ENCODE measurements at regions of chr10 and their contacts with region 1.

Region 1: GRCh38 chr10:35126530-35127296 is at the start of gene CREM:
- DNase-seq: peak; percentile 91 to 98 (median 96)
- H3K4me3 ChIP-seq: peak within 1 kb of the TSS; percentile 65 to 93 (median 86)
- H3K27ac ChIP-seq: peak within 1 kb of the TSS; percentile 88 to 100 (median 98)
- H3K27me3 ChIP-seq: no peaks in the 10 kb centered on the region
- CTCF ChIP-seq: peak; percentile 58 to 96 (median 84)
- total RNA-seq, gene CREM: 20.4 to 57.0 (median 37.2) TPM

Region 2: DNA sequence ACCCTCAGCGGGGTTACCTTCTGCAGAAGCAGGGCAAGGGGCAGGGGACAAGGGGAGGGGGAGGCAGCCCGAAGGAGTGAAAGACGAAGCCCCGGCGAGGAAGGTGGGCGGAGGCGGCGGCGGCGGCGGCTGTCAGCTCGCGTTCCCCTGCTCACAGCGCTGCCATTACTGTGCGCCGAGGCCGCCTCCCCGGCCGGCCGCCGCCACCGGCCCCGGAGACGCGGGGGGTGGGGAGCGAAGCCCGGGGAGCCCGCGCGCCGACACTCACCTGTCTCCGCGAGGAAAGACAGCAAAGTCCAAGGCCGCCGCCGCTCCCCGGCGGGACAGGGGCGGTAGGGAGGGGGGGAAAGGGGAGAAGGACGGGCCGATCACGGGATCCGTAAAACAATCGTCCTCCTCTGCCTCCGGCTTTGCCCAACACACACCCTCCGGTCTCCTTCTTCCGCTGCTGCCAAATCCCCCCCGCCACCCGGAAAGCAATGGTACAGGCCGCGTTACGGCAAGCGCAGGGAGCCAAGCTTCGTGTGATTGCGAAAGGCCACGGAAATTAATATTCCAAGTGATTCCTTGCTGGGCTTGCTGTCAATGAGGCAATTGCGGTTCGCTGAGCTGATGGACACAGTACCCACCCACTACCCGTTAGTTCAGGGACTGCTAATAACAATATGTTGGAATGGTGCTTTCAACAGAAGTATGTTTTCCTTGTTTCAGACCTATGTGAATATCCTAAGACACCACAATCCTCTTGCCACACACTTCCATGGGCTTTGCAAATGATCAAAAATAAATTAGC is 36.4 kb before region 1 on chr10 and contains the start of gene CUL2:
- intact Hi-C with region 1: loop called in 1 of 2 experiments (anchors 2 kb)
- DNase-seq: peak; percentile 80 to 96 (median 88)
- H3K4me3 ChIP-seq: peak within 1 kb of the TSS; percentile 60 to 96 (median 87)
- H3K27ac ChIP-seq: peak within 1 kb of the TSS; percentile 20 to 98 (median 92)
- H3K27me3 ChIP-seq: no peaks in the 10 kb centered on the region
- CTCF ChIP-seq: peak in 19 of 56 donors; percentile 7 to 48 (median 27)
- total RNA-seq, gene CUL2: 26.3 to 63.8 (median 45.2) TPM

Region 3: GRCh38 chr10:35195361-35196306 is 68.9 kb after region 1 on chr10:
- intact Hi-C with region 1: loop called (anchors 2 to 5 kb)
- DNase-seq: peak in 2 of 10 donors; percentile 55 to 57
- H3K4me3 ChIP-seq: peak overlapping the region; percentile 32 to 79 (median 59)
- H3K27ac ChIP-seq: peak overlapping the region; percentile 60 to 99 (median 91)
- H3K27me3 ChIP-seq: no peaks in the 10 kb centered on the region
- CTCF ChIP-seq: peak; percentile 65 to 94 (median 83)

Region 4: DNA sequence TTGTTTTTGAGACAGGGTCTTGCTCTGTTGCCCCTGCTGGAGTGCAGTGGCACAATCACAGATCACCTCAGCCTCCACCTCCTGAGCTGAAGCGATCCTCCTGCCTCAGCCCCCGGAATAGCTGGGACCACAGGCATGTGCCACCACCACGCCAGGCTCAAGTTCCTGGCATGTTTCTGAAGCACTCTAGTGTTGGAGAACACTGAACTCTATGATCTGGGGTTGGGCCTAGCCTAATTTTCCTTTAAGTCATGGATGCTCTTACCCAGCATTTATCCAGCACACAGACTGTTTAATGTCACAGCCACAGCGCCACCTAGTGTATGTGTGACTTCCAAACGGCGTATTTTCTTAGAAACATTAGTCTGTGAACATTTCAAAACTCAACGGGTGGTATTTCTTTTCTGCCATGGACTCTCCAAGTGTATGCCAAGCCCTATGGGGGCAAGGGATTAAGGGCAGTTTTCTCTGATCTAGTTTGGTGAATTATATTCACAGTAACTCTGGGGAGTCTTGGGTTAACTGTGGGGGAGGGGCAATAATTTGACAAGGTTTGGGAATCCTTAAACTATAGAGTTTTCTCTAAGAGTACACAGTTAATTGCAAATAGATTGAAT is 91.7 kb after region 1 on chr10:
- intact Hi-C with region 1: loop called (anchors 1 to 2 kb)
- DNase-seq: peak; percentile 28 to 93 (median 74)
- H3K4me3 ChIP-seq: peak overlapping the region in 7 of 59 donors; percentile 11 to 36 (median 16)
- H3K27ac ChIP-seq: peak overlapping the region in 39 of 59 donors; percentile 2 to 85 (median 51)
- H3K27me3 ChIP-seq: no peaks in the 10 kb centered on the region
- CTCF ChIP-seq: peak; percentile 76 to 99 (median 89)

Region 5: DNA sequence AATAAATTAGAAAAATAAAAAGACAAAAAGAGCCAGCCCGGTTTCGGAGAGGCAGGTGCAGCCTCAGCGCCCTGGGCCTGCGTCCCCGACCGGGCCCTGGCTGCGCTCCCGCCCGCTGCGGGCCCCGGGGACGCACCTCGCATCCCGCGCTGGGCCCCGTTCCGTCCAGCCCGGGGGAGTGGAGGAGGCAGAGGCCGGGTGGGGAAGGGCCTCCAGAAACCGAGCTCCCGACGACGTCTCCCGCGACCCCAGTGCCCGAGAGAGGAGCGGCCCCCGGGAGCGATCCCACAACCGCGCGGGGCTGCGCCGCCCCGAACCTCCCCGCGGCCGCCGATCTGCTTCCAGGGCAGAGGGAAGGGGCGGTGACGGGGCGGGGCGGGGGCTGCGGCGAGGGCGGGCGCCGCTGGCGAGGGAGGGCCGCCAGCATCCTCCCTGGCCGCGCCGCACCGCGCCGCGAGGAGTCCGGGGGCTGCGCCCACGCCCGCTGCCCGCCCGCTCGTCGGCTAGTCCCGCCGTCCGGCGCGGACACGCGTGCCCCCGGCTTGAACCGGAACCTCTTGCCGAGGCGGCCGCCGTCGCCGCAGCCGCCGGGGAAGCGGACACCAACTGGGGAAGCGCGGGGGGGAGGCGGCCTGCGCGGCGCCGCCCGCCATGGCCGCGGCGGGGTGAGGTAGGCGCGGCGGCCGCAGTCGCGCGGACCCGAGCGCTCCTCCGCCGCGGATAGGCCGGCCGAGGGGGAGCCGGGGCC is 209.5 kb after region 1 on chr10 and contains the start of gene CCNY:
- intact Hi-C with region 1: loop called in 1 of 2 experiments (anchors 5 kb)
- DNase-seq: peak; percentile 54 to 86 (median 68)
- H3K4me3 ChIP-seq: peak within 1 kb of the TSS; percentile 71 to 99 (median 94)
- H3K27ac ChIP-seq: peak within 1 kb of the TSS in 58 of 59 donors; percentile 41 to 94 (median 84)
- H3K27me3 ChIP-seq: no peaks in the 10 kb centered on the region
- CTCF ChIP-seq: peak in 10 of 56 donors; percentile 8 to 29 (median 21)
- total RNA-seq, gene CCNY: 62.3 to 136 (median 97.7) TPM

Measured in dorsolateral prefrontal cortex (tissue), 120 donors.